Common myeloid progenitor, CD34-positive (primary cell): ENCODE measurements at regions of chr14 and their contacts with region 1.

Region 1: GRCh38 chr14:103910262-103910935 is 17.9 kb upstream of the TDRD9 start:
- DNase-seq: peak; percentile 55 to 68 (median 64)
- H3K4me3 ChIP-seq: peak overlapping the region in 4 of 7 experiments; percentile 24 to 70 (median 45)
- H3K27ac ChIP-seq: no peak overlapping the region
- H3K4me1 ChIP-seq: peaks cover 0 to 10% (median 9%) of the 10 kb centered on the region in 4 experiments
- H3K27me3 ChIP-seq: no peaks in the 10 kb centered on the region

Region 2: DNA sequence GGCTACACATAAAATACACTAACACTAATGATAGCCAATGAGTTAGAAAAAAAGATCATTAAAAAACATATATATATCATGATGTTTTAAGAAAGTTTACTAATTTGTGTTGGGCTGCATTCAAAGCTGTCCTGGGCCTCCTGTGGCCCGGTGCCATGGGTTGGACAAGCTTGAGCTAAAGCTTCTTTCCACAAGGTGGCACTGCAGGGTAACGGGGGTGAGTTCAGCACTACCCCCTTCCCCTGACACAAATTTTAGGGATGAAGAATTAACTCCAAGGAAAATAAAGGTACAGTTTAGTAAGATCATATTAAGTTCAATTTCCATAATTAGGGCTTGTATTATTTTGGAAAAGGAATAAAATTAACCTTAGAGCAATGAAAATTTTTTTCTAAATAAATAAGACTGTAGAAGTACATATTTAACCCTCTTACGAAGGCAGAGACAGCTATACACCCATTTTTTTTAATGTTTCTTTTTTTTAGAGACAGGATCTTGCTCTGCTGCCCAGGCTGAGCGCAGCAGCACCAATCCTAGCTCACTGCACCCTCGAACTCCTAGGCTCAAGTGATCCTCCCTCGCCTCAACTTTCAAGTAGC is 101.9 kb before region 1 on chr14:
- CTCF ChIA-PET with region 1: interaction called, 119 read pairs
- POLR2A ChIA-PET with region 1: no interaction called
- DNase-seq: peak; percentile 69 to 79 (median 71)
- H3K4me3 ChIP-seq: no peak overlapping the region
- H3K27ac ChIP-seq: no peak overlapping the region
- H3K4me1 ChIP-seq: no peaks in the 10 kb centered on the region
- H3K27me3 ChIP-seq: peaks cover 0 to 6% (median 3%) of the 10 kb centered on the region in 5 experiments

Region 3: DNA sequence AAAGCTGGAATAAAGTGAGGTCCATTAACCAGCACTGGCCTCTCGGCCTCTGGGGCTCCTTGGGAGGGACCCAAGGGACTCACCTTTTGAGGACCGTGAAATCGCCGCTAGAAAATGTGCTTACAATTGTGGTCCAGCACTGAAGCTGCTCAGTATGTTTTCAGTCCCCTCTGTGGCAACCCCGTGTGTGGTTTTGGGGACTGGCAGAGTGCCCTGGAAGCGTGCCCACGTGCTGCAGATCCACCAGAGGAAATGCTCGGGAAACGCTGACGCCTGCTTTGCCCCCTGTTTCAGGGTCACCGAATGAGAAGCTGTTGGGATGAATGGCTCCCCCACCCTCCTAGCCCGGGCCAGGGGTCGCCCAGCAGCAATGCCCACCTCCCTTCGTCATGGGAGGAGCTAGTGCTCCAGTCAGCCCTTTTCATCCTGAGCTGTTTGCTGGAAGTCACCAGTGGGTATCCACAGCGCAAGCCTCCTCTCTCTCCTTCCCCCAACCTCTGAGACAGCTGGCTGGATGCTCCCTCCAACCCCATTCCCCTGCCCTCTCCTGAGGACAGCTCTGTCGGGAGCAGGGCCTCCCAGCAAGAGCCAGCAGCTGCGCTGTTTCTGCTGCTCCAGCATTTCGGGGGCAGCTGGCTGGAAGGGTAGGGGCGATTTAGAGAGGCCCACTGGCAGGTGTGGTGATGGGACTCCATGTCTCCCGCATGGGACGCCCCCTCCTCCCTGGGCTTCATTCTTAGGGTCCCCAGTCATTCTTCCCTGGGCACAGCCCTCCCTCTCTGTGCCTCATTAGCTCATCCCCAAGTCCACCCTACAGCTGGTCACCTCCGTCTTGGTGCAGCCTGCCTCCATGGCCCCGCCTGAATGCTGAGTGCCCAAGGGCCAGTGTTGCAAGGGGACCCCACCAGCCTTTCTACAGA is 29.8 kb before region 1 on chr14:
- CTCF ChIA-PET with region 1: interaction called, 19 read pairs
- POLR2A ChIA-PET with region 1: no interaction called
- DNase-seq: peak; percentile 88 to 94 (median 93)
- H3K4me3 ChIP-seq: peak overlapping the region in 5 of 7 experiments; percentile 13 to 71 (median 51)
- H3K27ac ChIP-seq: no peak overlapping the region
- H3K4me1 ChIP-seq: peaks cover 0 to 29% (median 25%) of the 10 kb centered on the region in 4 experiments
- H3K27me3 ChIP-seq: peaks cover 0 to 19% (median 0%) of the 10 kb centered on the region in 5 experiments

Region 4: GRCh38 chr14:103899316-103899715 is 11.1 kb before region 1 on chr14:
- CTCF ChIA-PET with region 1: interaction called, 15 read pairs
- POLR2A ChIA-PET with region 1: no interaction called
- DNase-seq: peak in 2 of 3 donors; percentile 37 to 45
- H3K4me3 ChIP-seq: no peak overlapping the region
- H3K27ac ChIP-seq: no peak overlapping the region
- H3K4me1 ChIP-seq: peaks cover 0 to 2% (median under 1%) of the 10 kb centered on the region in 4 experiments
- H3K27me3 ChIP-seq: peaks cover 0 to 6% (median 0%) of the 10 kb centered on the region in 5 experiments

Region 5: GRCh38 chr14:103920981-103921854 is 10.8 kb after region 1 on chr14:
- CTCF ChIA-PET with region 1: interaction called, 19 read pairs
- POLR2A ChIA-PET with region 1: no interaction called
- DNase-seq: peak; percentile 91 to 95 (median 94)
- H3K4me3 ChIP-seq: peak overlapping the region; percentile 78 to 96 (median 85)
- H3K27ac ChIP-seq: peak overlapping the region; percentile 84 to 91
- H3K4me1 ChIP-seq: peaks cover 3 to 50% (median 29%) of the 10 kb centered on the region in 4 experiments
- H3K27me3 ChIP-seq: no peaks in the 10 kb centered on the region

Region 6: DNA sequence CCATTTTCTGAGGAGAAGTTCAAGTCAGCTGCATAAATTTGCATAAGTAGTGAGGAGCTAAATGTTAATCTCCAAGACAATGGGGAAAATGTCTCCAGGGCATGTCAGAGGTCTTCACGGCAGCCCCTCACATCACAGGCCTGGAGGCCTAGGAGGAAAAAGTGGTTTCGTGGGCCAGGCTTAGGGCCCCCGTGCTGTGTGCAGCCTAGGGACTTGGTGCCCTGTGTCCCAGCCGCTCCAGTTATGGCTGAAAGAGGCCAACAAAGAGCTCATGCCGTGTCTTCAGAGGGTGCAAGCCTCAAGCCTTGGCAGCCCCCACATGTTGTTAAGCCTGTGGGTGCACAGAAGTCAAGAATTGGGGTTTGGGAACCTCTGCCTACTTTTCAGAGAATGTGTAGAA is 73.8 kb after region 1 on chr14:
- CTCF ChIA-PET with region 1: interaction called, 108 read pairs
- POLR2A ChIA-PET with region 1: no interaction called
- DNase-seq: no peak
- H3K4me3 ChIP-seq: no peak overlapping the region
- H3K27ac ChIP-seq: no peak overlapping the region
- H3K4me1 ChIP-seq: no peaks in the 10 kb centered on the region
- H3K27me3 ChIP-seq: peaks cover 0 to 3% (median 0%) of the 10 kb centered on the region in 5 experiments